PC-9 (cell line): ENCODE measurements at regions of chr16 and their contacts with region 1.

Region 1: DNA sequence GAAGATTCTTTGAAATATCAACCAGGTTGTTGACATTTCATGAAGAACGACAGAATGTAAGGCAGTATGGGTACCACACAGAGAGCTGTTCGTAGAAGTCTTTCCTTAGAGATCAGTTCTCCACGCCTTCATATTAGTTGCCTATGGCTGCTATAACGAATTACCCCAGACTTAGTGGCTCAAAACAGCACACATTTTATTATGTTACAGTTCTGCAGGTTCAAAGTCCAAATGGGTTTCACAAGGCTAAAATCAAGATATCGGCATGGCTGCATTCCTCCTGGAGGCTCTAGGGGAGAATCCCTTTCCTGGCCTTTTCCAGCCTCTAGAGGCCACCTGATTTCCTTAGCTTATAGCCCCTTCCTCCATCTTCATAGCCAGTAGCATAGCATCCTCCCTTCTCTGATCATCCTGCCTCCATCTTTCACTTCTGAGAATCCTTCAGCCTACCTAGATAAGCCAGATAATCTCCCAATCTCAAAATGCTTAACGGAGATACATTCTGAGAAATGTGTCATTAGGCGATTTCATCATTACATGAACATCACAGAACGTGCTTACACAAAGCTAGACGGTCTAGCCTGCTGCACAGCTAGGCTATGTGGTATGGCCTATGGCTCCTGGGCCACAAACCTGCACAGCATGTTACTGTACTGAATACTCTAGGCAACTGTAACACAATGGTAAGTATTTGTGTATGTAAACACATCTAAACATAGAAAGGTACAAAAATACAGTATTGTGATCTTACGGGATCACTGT is 26.0 kb downstream of the ERCC4 start:
- DNase-seq: no peak
- H3K4me3 ChIP-seq: no peak overlapping the region
- H3K27ac ChIP-seq: no peak overlapping the region
- H3K4me1 ChIP-seq: no peaks in the 10 kb centered on the region
- H3K27me3 ChIP-seq: no peaks in the 10 kb centered on the region
- CTCF ChIP-seq: no peak

Region 2: GRCh38 chr16:13896543-13897183 is 49.3 kb before region 1 on chr16:
- CTCF ChIA-PET with region 1: no interaction called
- POLR2A ChIA-PET with region 1: no interaction called
- intact Hi-C with region 1: no loop called
- DNase-seq: no peak
- H3K4me3 ChIP-seq: no peak overlapping the region
- H3K27ac ChIP-seq: no peak overlapping the region
- H3K4me1 ChIP-seq: no peaks in the 10 kb centered on the region
- H3K27me3 ChIP-seq: peaks cover 48% of the 10 kb centered on the region
- CTCF ChIP-seq: peak; percentile 60; the same call in 1 of the 2 replicates

Region 3: GRCh38 chr16:15928261-15929104 is 1982.6 kb after region 1 on chr16:
- CTCF ChIA-PET with region 1: no interaction called
- POLR2A ChIA-PET with region 1: interaction called, 14 read pairs
- intact Hi-C with region 1: no loop called
- DNase-seq: peak in 1 of 2 experiments; percentile 33
- H3K4me3 ChIP-seq: no peak overlapping the region
- H3K27ac ChIP-seq: no peak overlapping the region
- H3K4me1 ChIP-seq: peaks cover 19% of the 10 kb centered on the region
- H3K27me3 ChIP-seq: no peaks in the 10 kb centered on the region
- CTCF ChIP-seq: no peak